ENCODE measurements at regions of chr18 and their contacts with region 1.

Region 1: GRCh38 chr18:26656944-26657536 is 108.7 kb upstream of the KCTD1 start:
- DNase-seq: peak in 1 of 2 donors; percentile 87
- H3K4me3 ChIP-seq: peak overlapping the region; percentile 79 to 97
- H3K27ac ChIP-seq: peak overlapping the region; percentile 80 to 87
- H3K4me1 ChIP-seq: peaks cover 0 to 14% of the 10 kb centered on the region in 2 donors
- H3K27me3 ChIP-seq: no peaks in the 10 kb centered on the region
- CTCF ChIP-seq: peak in 2 of 3 experiments; percentile 20 to 26

Region 2: GRCh38 chr18:25230658-25231326 is 1426.2 kb before region 1 on chr18:
- intact Hi-C with region 1: loop called (anchors 10 kb)
- DNase-seq: peak; percentile 17 to 91
- H3K4me3 ChIP-seq: peak overlapping the region in 1 of 2 donors; percentile 43
- H3K27ac ChIP-seq: peak overlapping the region; percentile 68 to 80
- H3K4me1 ChIP-seq: peaks cover 0 to 21% of the 10 kb centered on the region in 2 donors
- H3K27me3 ChIP-seq: no peaks in the 10 kb centered on the region
- CTCF ChIP-seq: no peak

Region 3: GRCh38 chr18:26090130-26091046 is 566.7 kb before region 1 on chr18 and contains the start of gene SS18:
- intact Hi-C with region 1: loop called (anchors 2 kb)
- DNase-seq: peak; percentile 67 to 97
- H3K4me3 ChIP-seq: peak within 1 kb of the TSS; percentile 79 to 94
- H3K27ac ChIP-seq: peak within 1 kb of the TSS; percentile 97 to 99
- H3K4me1 ChIP-seq: peaks cover 0 to 13% of the 10 kb centered on the region in 2 donors
- H3K27me3 ChIP-seq: no peaks in the 10 kb centered on the region
- CTCF ChIP-seq: peak in 1 of 3 experiments; percentile 4
- total RNA-seq, gene SS18: 31.0 TPM

Region 4: GRCh38 chr18:26226229-26227005 is 430.6 kb before region 1 on chr18 and contains the start of gene TAF4B:
- intact Hi-C with region 1: loop called (anchors 2 kb)
- DNase-seq: peak; percentile 71 to 95
- H3K4me3 ChIP-seq: peak within 1 kb of the TSS; percentile 80 to 96
- H3K27ac ChIP-seq: peak within 1 kb of the TSS; percentile 66 to 67
- H3K4me1 ChIP-seq: peaks cover 0 to 7% of the 10 kb centered on the region in 2 donors
- H3K27me3 ChIP-seq: no peaks in the 10 kb centered on the region
- CTCF ChIP-seq: no peak
- total RNA-seq, gene TAF4B: 3.0 TPM

Region 5: GRCh38 chr18:26307189-26307773 is 349.8 kb before region 1 on chr18:
- intact Hi-C with region 1: loop called (anchors 5 kb)
- DNase-seq: no peak
- H3K4me3 ChIP-seq: no peak overlapping the region
- H3K27ac ChIP-seq: no peak overlapping the region
- H3K4me1 ChIP-seq: no peaks in the 10 kb centered on the region
- H3K27me3 ChIP-seq: no peaks in the 10 kb centered on the region
- CTCF ChIP-seq: peak in 2 of 3 experiments; percentile 49

Region 6: DNA sequence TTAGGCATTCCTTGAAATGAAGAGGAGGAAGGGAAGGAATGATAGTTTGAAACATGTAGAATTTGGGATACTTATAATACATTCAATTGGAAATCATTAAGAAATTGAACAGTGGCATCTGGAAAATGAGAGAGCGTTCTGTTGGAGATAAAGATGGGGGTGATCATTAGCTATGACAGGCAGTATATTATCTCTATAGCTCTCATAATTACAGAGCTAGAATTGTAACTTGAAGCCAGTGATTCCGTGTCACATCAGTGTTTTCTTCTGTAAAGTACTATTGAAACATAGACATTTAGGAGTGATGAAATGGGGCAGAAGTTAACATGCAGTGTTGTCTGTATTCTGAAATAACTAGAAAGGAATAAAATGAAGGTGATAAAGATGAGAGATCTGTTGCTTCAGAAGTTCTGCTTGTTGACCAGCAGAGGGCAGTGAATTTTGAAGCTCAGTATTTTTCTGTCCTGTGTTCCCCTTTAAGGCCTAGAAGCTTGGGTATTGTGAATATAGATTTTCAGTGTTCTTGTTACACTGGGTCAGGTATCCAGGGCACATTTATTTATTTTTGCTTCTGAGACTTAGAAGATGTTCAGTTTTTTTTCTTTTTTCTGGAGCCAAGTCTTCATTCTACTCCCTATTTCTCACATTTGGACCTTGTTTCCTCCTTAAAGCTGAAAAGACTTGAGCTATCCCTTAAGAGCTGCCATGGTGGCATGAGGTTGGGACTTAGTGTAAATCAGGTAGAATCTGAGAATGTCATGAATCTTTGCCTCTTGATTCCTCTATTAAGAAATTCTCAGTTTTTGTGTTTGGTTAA is 273.4 kb before region 1 on chr18:
- intact Hi-C with region 1: loop called (anchors 5 kb)
- DNase-seq: no peak
- H3K4me3 ChIP-seq: no peak overlapping the region
- H3K27ac ChIP-seq: no peak overlapping the region
- H3K4me1 ChIP-seq: no peaks in the 10 kb centered on the region
- H3K27me3 ChIP-seq: no peaks in the 10 kb centered on the region
- CTCF ChIP-seq: peak; percentile 31 to 68 (median 51)

Region 7: DNA sequence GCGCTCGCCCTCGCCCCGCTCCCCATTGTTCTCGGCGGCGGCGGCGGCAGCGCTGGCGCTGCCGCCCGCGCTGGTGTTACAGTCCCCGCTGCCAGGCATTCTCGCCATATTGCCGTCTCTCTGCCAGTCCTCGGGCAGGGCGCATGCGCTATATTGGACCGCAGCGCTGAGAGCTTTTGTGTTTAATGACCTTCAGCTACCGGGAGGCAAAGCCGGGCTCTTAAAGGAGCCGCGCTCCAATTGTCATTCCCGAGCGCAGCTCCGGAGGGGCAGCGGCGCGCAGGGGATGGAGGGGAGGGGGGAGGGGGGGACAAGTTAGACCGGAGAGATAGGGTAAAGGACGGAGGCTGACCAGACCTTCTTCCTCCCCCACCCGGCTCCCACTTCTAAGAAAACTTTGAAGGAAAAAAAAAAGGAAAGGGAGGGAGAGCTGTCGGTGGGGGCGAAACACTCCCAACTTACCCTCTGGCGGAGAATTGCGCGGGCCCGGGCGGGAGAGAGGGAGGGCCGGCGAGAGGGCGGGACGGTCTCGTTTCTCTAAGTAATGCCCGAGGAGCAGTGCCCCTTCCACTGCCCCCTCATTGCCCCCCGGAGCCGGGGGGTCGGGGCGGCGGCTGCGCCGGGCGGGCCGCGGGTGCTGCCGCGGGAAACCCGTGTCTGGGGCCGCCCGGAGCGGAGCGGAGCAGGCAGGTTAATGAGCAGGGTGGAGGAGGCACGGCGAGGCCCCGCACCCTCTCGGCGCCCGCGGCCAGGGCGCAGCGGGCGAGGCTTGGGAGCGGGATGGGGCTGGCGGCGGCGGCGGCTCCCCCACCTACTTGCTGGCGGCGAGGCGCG is 108.4 kb before region 1 on chr18 and contains the start of gene KCTD1:
- intact Hi-C with region 1: loop called (anchors 1 kb)
- DNase-seq: peak; percentile 18 to 89
- H3K4me3 ChIP-seq: peak within 1 kb of the TSS; percentile 91 to 92
- H3K27ac ChIP-seq: peak within 1 kb of the TSS; percentile 84
- H3K4me1 ChIP-seq: peaks cover 3 to 17% of the 10 kb centered on the region in 2 donors
- H3K27me3 ChIP-seq: no peaks in the 10 kb centered on the region
- CTCF ChIP-seq: no peak
- total RNA-seq, gene KCTD1: 1.3 TPM

Measured in ascending aorta (tissue), 2 donors.